WTC11 (cell line): ENCODE measurements at regions of chr22 and their contacts with region 1.

Region 1: DNA sequence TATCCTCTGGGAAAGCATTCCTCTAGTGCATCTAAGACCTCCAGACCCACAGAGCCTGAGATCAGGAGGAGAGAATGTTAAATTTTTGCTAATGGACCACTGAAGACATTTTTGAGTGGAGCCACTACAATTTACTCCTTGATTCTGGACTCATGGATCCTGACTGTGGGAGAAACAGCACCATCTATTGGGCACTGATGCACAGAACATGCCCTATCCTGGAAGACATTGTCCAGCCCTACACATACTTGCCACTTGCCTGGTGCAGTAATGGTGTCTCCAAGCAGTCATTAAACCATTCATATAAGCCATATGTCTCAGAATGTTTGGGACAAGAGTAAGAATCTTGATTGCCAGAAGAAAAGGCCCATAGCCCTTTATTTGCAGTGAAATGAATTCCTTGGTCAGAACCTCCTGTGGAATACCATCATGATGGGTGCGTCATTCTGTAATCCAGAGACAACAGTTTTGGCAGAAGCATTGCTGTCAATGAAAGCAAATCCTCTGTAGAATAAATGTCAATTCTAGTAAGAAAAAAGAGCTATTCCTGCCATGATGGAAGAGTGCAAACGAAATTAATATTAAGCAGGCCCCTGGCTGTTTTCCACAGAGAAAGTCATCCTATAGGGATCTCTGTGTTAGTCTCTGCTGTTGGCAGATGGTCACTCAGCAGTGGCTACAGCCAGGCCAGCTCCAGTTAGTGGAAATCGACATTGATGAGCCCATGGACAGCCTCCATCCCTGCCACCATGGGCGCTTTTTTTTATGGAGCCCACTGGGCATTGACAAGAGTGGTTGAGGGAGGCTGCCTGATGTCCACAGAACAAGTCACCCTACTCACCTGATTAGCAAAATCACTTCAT is 43.5 kb downstream of the GGTLC2 start:
- DNase-seq: peak; percentile 24
- ATAC-seq: peak; percentile 82
- H3K4me3 Mint-ChIP-seq: no peak overlapping the region
- H3K27ac Mint-ChIP-seq: no peak overlapping the region
- H3K4me1 Mint-ChIP-seq: peaks cover 4% of the 10 kb centered on the region; the same call in 1 of the 2 replicates
- H3K27me3 Mint-ChIP-seq: peaks cover 95% of the 10 kb centered on the region
- CTCF ChIP-seq: peak; percentile 39

Region 2: DNA sequence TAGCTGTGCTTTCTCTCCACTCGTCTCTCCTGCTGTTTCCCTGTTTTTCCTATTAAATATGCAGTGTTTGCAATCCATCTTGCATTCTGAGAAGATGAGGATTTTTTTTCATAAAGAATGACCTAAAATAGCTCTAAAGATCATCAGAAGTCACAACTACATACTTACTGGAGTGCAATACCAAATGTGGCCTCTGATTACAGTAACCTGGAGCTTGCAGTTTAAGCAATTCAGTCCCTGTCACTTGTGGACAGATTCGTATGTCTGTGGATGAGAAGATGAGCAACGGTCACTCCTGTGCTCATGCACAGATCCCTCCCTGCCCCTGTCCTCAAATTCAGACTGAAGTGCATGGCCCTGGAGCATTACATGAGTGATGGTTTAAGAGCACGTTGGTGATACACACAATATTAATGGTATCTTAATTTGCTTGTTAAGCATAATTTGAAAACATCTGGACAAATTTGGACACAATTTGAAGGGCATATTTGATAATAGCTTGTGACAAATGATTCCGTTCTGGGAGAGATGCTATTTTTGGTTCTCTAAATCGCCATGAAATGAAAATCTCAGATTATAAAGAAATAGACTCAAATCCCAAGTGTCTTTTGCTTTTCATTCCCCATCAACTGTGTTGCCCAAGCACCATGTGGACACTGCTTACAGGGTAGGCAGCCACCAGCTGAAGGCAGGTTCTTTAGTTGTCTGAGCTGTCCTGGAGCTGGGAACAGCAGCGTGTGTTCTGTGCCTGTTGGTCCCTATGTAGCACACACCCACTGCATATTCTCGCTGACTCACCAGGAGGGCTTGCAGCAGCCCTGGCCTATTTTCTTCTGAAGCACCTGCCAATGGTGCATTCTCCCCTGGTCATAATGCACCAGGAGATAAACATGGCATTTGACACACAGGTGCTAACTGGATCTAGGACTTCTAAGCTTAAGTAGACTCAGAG is 96.2 kb before region 1 on chr22:
- CTCF ChIA-PET with region 1: interaction called, 13 read pairs
- POLR2A ChIA-PET with region 1: no interaction called
- DNase-seq: no peak
- ATAC-seq: no peak
- H3K4me3 Mint-ChIP-seq: no peak overlapping the region
- H3K27ac Mint-ChIP-seq: no peak overlapping the region
- H3K4me1 Mint-ChIP-seq: no peaks in the 10 kb centered on the region; the same call in 1 of the 2 replicates
- H3K27me3 Mint-ChIP-seq: peaks cover 93% of the 10 kb centered on the region
- CTCF ChIP-seq: no peak

Region 3: GRCh38 chr22:22616636-22617035 is 71.2 kb before region 1 on chr22:
- CTCF ChIA-PET with region 1: interaction called, 14 read pairs
- POLR2A ChIA-PET with region 1: no interaction called
- DNase-seq: no peak
- ATAC-seq: no peak
- H3K4me3 Mint-ChIP-seq: no peak overlapping the region
- H3K27ac Mint-ChIP-seq: no peak overlapping the region
- H3K4me1 Mint-ChIP-seq: peaks cover 6% of the 10 kb centered on the region
- H3K27me3 Mint-ChIP-seq: peaks cover 97% of the 10 kb centered on the region
- CTCF ChIP-seq: no peak

Region 4: DNA sequence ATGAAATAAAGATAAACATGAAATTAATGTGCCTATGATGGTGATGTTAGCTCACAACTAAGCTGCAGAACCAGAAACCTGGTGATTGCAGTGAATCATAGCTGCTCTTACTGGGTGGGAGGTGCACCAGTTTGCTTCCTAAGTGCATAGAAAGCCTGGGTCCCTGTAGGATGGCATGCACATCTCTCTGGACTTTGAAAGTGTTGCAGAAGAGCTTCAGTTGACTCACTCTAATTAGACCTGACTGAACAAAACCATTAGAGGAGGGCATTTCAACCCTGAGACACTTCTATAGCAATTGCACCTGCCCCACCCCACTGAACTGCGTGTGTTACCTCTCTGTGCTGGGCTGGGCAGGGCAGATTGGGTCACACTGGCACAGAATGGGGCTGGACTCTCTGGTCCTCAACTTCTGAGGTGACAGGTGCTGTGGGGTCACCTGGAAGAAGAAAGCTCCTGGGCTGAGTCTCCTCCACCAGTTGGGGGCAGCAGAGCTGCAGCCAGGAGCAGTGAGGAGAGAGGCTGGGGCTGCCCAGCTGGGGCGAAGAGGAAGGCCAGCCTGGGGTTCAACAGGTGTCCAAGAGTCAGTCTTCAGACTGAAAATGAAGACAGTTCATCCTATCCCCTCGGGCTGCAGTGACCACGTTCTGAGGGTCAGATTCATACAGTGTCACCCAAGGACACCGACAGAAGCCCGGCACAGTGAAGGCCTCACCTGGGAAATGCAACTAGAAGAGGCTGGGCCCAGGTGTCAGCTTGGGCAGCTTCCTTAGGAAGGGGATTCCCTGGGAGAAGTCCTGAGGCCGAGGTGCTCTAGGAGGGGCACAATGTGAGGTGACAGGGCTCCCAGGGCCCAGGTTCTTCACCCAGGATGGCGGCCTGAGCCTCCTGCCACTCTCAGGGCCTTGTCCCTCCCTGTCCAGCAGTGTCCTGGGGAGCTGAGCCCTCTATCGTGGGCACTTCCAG is 14.7 kb after region 1 on chr22:
- CTCF ChIA-PET with region 1: interaction called, 22 read pairs
- POLR2A ChIA-PET with region 1: no interaction called
- DNase-seq: peak; percentile 61
- ATAC-seq: peak; percentile 86
- H3K4me3 Mint-ChIP-seq: no peak overlapping the region
- H3K27ac Mint-ChIP-seq: no peak overlapping the region
- H3K4me1 Mint-ChIP-seq: no peaks in the 10 kb centered on the region
- H3K27me3 Mint-ChIP-seq: peaks cover 99% of the 10 kb centered on the region
- CTCF ChIP-seq: peak; percentile 52; the same call in 1 of the 2 replicates

Region 5: GRCh38 chr22:22733881-22734373 is 46.1 kb after region 1 on chr22:
- CTCF ChIA-PET with region 1: interaction called, 10 read pairs
- POLR2A ChIA-PET with region 1: no interaction called
- DNase-seq: no peak
- ATAC-seq: no peak
- H3K4me3 Mint-ChIP-seq: no peak overlapping the region
- H3K27ac Mint-ChIP-seq: no peak overlapping the region
- H3K4me1 Mint-ChIP-seq: peaks cover 13% of the 10 kb centered on the region
- H3K27me3 Mint-ChIP-seq: peaks cover 98% of the 10 kb centered on the region
- CTCF ChIP-seq: no peak

Region 6: DNA sequence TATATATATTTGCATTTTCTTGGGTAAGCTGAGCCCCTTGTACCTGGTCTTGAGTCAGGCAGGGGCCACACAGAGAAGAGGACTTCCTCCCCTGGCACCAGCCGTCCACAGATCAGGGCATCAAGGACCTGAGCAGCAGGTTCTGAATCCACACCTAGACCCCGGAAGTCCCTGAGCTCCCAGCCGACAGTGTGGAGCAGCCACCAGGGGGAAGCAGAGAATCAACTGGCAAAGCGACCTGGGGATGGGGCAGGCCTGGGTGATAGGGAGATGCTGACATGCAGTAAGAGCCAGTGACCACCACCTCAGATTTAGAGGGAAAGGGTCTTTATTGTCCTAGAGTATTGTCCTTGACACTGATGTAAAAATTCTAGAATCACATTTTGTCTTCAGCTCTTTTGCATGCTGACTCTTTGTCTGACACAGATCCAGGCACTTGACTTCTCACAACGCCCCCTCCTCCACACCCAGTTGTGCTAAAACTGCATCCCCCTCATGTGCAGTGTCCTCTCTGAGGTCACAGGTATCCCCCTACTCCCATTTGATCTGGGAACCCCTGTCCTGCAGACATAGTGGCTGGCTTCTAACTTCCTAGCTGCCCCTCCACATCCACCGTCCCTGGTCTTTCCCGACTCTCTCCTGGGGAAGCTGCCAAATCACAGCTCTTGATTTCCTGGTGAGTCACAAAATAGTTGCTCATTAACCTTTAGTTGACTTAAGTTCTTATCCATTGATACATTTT is 65.8 kb after region 1 on chr22:
- CTCF ChIA-PET with region 1: interaction called, 10 read pairs
- POLR2A ChIA-PET with region 1: no interaction called
- DNase-seq: peak; percentile 83
- ATAC-seq: peak; percentile 97
- H3K4me3 Mint-ChIP-seq: no peak overlapping the region
- H3K27ac Mint-ChIP-seq: no peak overlapping the region
- H3K4me1 Mint-ChIP-seq: no peaks in the 10 kb centered on the region
- H3K27me3 Mint-ChIP-seq: peaks cover 96% of the 10 kb centered on the region
- CTCF ChIP-seq: peak; percentile 33; the same call in 1 of the 2 replicates

Region 7: DNA sequence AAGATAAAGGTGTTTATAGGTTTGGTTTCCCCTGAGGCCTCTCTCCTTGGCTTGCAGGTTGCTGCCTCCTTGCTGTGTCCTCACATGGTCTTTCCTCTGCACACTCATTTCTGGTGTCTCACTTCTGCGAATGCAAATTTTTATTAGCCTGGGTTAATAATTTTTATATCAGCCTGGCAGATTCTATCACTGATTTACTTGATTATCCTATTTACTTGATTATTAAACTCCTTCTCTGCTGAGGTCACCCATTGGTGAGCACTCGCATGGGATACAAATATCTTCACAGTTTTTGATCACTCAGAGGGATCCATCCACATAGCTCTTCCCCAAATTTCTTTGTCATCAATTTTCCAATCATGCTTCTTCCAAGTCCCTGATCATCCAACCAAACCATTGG is 108.9 kb after region 1 on chr22:
- CTCF ChIA-PET with region 1: no interaction called
- POLR2A ChIA-PET with region 1: no interaction called
- DNase-seq: no peak
- ATAC-seq: no peak
- H3K4me3 Mint-ChIP-seq: no peak overlapping the region
- H3K27ac Mint-ChIP-seq: no peak overlapping the region
- H3K4me1 Mint-ChIP-seq: peaks cover 5% of the 10 kb centered on the region; the same call in 1 of the 2 replicates
- H3K27me3 Mint-ChIP-seq: peaks cover 98% of the 10 kb centered on the region
- CTCF ChIP-seq: no peak